Activated CD4-positive, alpha-beta T cell treated with anti-CD3 and anti-CD28 coated beads for 36 hours (primary cell): ENCODE measurements at regions of chr20 and their contacts with region 1.

Region 1: DNA sequence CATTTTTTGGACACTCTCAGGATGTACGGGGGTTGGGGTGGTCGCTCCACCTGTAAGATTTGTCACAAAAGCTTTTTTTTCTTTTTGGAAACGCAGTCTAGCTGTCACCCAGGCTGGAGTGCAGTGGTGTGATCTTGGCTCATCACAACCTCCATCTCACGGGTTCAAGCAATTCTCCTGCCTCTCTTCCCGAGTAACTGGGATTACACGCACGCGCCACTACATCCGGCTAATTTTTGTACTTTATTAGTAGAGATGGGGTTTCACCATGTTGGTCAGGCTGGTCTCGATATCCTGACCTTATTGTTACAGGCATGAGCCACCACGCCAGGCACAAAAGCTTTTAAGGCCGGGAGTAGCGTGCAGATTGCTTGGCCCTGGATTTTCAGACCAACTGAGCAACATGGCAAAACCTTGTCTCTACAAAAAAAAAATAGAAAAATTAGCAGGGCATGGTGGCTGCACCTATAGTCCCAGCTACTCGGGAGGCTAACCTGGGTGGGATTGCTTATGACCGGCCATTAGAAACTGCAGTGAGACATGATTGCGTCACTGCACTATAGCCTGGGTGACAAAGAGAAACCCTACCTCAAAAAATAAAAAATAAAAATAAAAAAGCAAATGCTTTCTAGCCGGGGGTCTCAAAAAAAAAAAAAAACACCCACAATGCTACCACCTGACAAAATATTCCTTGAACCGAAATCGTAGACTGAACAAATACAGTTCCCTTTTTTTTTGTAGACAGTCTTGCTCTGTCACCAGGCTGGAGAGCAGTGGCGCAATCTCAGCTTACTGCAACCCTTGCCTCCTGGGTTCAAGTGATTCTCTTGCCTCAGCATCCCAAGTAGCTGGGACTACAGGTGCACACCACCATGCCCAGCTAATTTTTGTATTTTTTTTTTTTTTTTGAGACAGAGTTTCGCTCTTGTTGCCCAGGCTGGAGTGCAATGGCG is 15.0 kb downstream of the RBM39 start:
- DNase-seq: no peak
- ATAC-seq: no peak
- H3K4me3 Mint-ChIP-seq: no peak overlapping the region
- H3K27ac Mint-ChIP-seq: no peak overlapping the region
- H3K4me1 Mint-ChIP-seq: peaks cover 39% of the 10 kb centered on the region
- H3K27me3 Mint-ChIP-seq: no peaks in the 10 kb centered on the region

Region 2: DNA sequence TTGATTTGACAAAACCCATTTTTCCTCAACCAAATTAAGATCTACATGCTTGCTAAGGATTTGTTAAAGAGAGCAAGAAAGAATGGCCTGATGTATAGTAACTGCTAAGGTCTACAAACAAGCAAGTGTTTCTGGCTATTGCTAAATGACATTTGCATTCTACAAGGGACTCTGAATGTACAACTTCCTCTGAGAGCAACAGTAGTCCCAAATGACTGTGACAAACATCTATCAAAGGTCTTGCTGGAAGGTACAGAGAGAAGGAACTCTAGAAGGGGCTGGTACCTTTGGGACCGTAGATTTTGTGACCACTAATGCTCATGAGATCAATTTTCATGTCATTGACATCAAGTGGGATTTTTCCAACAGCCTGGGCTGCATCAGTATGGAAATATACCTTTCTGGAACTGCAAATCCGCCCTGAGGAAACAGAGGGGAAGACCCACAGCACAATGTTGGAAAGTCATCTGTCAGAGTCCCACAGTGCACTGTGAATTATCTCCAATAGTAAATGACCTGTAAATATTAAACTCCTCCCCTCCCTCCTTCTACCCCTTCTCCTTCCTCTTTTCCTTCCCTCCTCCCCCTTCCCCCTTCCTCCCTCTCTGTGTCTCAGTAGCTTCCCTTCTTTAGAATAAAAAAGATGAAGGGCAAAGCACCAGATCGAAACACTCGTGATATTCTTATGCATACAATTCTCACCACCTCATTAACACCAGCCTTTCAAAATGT is 46.4 kb before region 1 on chr20:
- CTCF ChIA-PET with region 1: no interaction called
- POLR2A ChIA-PET with region 1: no interaction called
- intact Hi-C with region 1: no loop called
- DNase-seq: no peak
- ATAC-seq: no peak
- H3K4me3 Mint-ChIP-seq: no peak overlapping the region
- H3K27ac Mint-ChIP-seq: no peak overlapping the region
- H3K4me1 Mint-ChIP-seq: no peaks in the 10 kb centered on the region
- H3K27me3 Mint-ChIP-seq: no peaks in the 10 kb centered on the region

Region 3: GRCh38 chr20:35711588-35712209 is 15.3 kb before region 1 on chr20:
- CTCF ChIA-PET with region 1: interaction called, 5 read pairs
- POLR2A ChIA-PET with region 1: interaction called, 5 read pairs
- intact Hi-C with region 1: loop called in 1 of 2 experiments (anchors 2 kb)
- DNase-seq: no peak
- ATAC-seq: peak; percentile 76
- H3K4me3 Mint-ChIP-seq: peak overlapping the region; percentile 33
- H3K27ac Mint-ChIP-seq: peak overlapping the region; percentile 86
- H3K4me1 Mint-ChIP-seq: peaks cover 48% of the 10 kb centered on the region
- H3K27me3 Mint-ChIP-seq: no peaks in the 10 kb centered on the region